HepG2 (cell line): ENCODE measurements at regions of chr2 and their contacts with region 1.

Region 1: GRCh38 chr2:27264753-27265535 is 2.1 kb upstream of the SLC30A3 start:
- DNase-seq: peak; percentile 73
- ATAC-seq: peak; percentile 79
- H3K4me3 ChIP-seq: peak overlapping the region; percentile 56 to 77 (median 58)
- H3K27ac ChIP-seq: no peak overlapping the region
- H3K4me1 ChIP-seq: peaks cover 26% of the 10 kb centered on the region
- H3K27me3 ChIP-seq: peaks cover 19 to 79% of the 10 kb centered on the region in 2 experiments
- CTCF ChIP-seq: peak; percentile 90
- EP300 ChIP-seq: 0 out of 4 replicates have a peak, but pooled peaks of 1 of the 2 experiments have one; percentile 22
- POLR2A ChIP-seq: no peak
- RAD21 ChIP-seq: peak; percentile 88

Region 2: GRCh38 chr2:27291865-27292264 is 26.9 kb after region 1 on chr2:
- CTCF ChIA-PET with region 1: no interaction called
- POLR2A ChIA-PET with region 1: interaction called, 5 read pairs
- in situ Hi-C with region 1: no loop called
- intact Hi-C with region 1: loop called (anchors 1 kb)
- DNase-seq: peak; percentile 44
- ATAC-seq: peak; percentile 78
- H3K4me3 ChIP-seq: peak overlapping the region; percentile 13 to 52 (median 25); a peak in 2 of 6 replicates
- H3K27ac ChIP-seq: no peak overlapping the region
- H3K4me1 ChIP-seq: peaks cover 82% of the 10 kb centered on the region
- H3K27me3 ChIP-seq: no peaks in the 10 kb centered on the region
- CTCF ChIP-seq: peak; percentile 78
- EP300 ChIP-seq: no peak
- POLR2A ChIP-seq: no peak
- RAD21 ChIP-seq: no peak; the same call in 1 of the 2 replicates

Region 3: DNA sequence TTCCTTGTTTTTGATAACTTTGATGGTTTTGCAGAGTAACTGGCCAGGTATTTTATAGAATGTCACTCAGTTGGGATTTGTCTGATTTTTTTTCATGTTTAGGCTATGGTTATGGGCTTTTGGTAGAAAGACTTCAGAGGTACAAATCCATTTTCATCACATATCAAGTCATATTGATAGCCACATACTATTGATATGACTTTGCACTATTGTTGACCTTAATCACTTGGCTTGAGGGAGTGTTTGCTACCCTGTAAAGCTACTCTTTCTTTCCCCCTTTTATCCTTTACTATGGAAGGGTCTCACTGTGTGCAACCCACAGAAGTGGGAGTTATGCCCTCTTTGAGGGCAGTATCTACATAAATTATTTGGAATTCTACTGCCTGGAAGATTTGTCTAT is 735.3 kb after region 1 on chr2:
- CTCF ChIA-PET with region 1: no interaction called
- POLR2A ChIA-PET with region 1: no interaction called
- in situ Hi-C with region 1: no loop called
- intact Hi-C with region 1: no loop called
- DNase-seq: no peak
- ATAC-seq: no peak
- H3K4me3 ChIP-seq: no peak overlapping the region
- H3K27ac ChIP-seq: no peak overlapping the region
- H3K4me1 ChIP-seq: peaks cover 8% of the 10 kb centered on the region; the same call in 1 of the 2 replicates
- H3K27me3 ChIP-seq: no peaks in the 10 kb centered on the region
- CTCF ChIP-seq: no peak
- EP300 ChIP-seq: no peak
- POLR2A ChIP-seq: no peak
- RAD21 ChIP-seq: no peak